ENCODE measurements at regions of chrX and their contacts with region 1.

Region 1: GRCh38 chrX:41799661-41800060 is 75.7 kb downstream of the GPR82 start:
- DNase-seq: no peak
- ATAC-seq: no peak
- H3K4me3 Mint-ChIP-seq: no peak overlapping the region
- H3K27ac Mint-ChIP-seq: peak overlapping the region in 8 of 10 donors; percentile 48 to 78 (median 70)
- H3K4me1 Mint-ChIP-seq: peaks cover 15 to 56% (median 31%) of the 10 kb centered on the region in 4 donors
- H3K27me3 Mint-ChIP-seq: no peaks in the 10 kb centered on the region

Region 2: GRCh38 chrX:42943051-42943974 is 1143.7 kb after region 1 on chrX:
- POLR2A ChIA-PET with region 1: interaction called, 12 read pairs
- DNase-seq: peak in 8 of 10 donors; percentile 4 to 70 (median 44)
- ATAC-seq: peak; percentile 53 to 54
- H3K4me3 Mint-ChIP-seq: peak overlapping the region; percentile 46 to 79 (median 62)
- H3K27ac Mint-ChIP-seq: peak overlapping the region; percentile 85 to 98 (median 94)
- H3K4me1 Mint-ChIP-seq: peaks cover 25 to 94% (median 82%) of the 10 kb centered on the region in 4 donors
- H3K27me3 Mint-ChIP-seq: no peaks in the 10 kb centered on the region